GM13976 (cell line): ENCODE measurements at regions of chr16 and their contacts with region 1.

Region 1: GRCh38 chr16:48687421-48688038 is 77.5 kb upstream of the N4BP1 start:
- DNase-seq: peak; percentile 63
- CTCF ChIP-seq: peak; percentile 62

Region 2: GRCh38 chr16:48231727-48232492 is 455.6 kb before region 1 on chr16:
- in situ Hi-C with region 1: no loop called
- DNase-seq: peak; percentile 69
- CTCF ChIP-seq: peak; percentile 65

Region 3: GRCh38 chr16:48596326-48596725 is 91.2 kb before region 1 on chr16:
- in situ Hi-C with region 1: no loop called
- DNase-seq: no peak
- CTCF ChIP-seq: no peak

Region 4: DNA sequence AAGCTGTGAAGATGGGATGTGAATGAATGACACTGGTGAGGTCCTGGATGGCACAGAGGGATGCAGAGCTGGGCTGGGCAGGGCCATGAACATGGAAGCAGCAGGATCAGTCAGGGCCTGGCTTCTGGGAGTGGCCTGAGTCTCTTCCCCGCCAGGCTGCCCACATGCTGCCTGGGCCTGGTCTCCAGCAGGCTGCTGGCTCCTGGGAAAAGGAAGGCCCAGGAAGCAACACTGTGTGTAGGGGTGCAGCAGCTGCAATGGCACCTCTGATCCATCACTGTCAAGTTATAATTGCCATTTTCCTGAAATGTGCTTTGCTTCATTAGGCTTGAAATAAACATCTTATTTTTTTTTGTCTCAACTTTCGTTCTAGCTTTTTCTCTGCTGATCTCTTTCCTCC is 182.6 kb after region 1 on chr16:
- in situ Hi-C with region 1: no loop called
- DNase-seq: no peak
- CTCF ChIP-seq: no peak

Region 5: GRCh38 chr16:49183911-49184310 is 496.4 kb after region 1 on chr16:
- in situ Hi-C with region 1: loop called (anchors 25 kb)
- DNase-seq: no peak
- CTCF ChIP-seq: no peak

Region 6: GRCh38 chr16:49348408-49349177 is 661.1 kb after region 1 on chr16:
- in situ Hi-C with region 1: loop called (anchors 10 kb)
- DNase-seq: no peak
- CTCF ChIP-seq: no peak